ENCODE measurements at regions of chr12 and their contacts with region 1.

Region 1: DNA sequence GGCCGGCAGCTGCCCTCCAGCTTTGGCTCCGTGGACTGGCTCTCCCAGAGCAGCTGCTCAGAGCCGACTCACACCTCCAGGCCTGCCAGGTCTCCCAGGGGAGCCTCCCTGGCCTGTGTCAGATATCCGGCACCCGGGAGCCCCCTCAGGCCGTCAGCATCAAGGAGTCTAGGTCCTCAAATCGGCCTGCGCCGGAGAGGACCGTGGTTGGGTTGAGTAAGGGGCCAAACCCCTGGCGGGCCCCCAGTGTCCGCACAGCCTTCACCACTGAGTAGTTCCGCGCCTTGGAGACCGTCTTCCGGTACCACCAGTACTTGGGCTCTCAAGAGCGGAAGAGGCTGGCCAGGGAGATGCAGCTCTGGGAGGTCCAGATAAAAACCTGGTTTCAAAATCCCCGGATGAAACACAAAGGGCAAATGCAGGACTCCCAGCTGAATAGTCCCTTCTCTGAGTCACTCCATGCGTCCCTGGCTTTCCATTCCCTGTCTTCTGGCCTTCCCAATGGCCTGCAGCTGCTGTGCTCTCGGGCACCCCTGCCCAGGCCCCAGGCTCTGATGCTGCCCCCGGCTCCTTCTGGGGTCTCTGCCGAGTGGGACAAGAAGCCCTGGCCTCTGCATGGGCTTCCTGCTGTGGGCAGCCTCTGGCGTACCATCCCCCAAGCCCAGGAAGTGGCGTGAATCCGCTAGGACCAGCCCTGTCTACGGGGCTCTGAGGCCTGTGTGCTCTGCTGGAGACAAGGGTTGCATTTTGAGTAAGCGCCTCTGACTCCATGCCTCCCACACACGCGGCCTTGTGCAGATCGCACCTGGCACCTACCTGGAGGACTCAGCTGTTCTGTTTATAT is 245.1 kb upstream of the ATXN7L3B start:
- DNase-seq: peak; percentile 57 to 95 (median 72)
- ATAC-seq: peak; percentile 93
- H3K4me3 ChIP-seq: peak overlapping the region; percentile 75
- H3K27ac ChIP-seq: peak overlapping the region; percentile 95
- H3K4me1 ChIP-seq: peaks cover 6 to 23% of the 10 kb centered on the region in 2 experiments; a peak in 4 of 5 replicates
- H3K27me3 ChIP-seq: no peaks in the 10 kb centered on the region
- CTCF ChIP-seq: no peak
- EP300 ChIP-seq: no peak
- POLR2A ChIP-seq: peak; percentile 95
- RAD21 ChIP-seq: no peak

Region 2: GRCh38 chr12:74170645-74171477 is 121.7 kb before region 1 on chr12:
- CTCF ChIA-PET with region 1: no interaction called
- POLR2A ChIA-PET with region 1: interaction called, 5 read pairs
- in situ Hi-C with region 1: no loop called
- intact Hi-C with region 1: loop called (anchors 2 kb)
- DNase-seq: peak; percentile 21 to 65 (median 35)
- ATAC-seq: peak; percentile 78
- H3K4me3 ChIP-seq: peak overlapping the region; percentile 69
- H3K27ac ChIP-seq: peak overlapping the region; percentile 91
- H3K4me1 ChIP-seq: peaks cover 6 to 10% of the 10 kb centered on the region in 2 experiments; a peak in 4 of 5 replicates
- H3K27me3 ChIP-seq: no peaks in the 10 kb centered on the region
- CTCF ChIP-seq: no peak
- EP300 ChIP-seq: no peak
- POLR2A ChIP-seq: peak; percentile 60; the same call in 1 of the 2 replicates
- RAD21 ChIP-seq: no peak

Measured in K562 (cell line).